ENCODE measurements at regions of chr15 and their contacts with region 1.

Region 1: GRCh38 chr15:90071208-90071807 is 31.0 kb downstream of the IDH2 start:
- DNase-seq: peak; percentile 21
- H3K4me3 ChIP-seq: no peak overlapping the region
- CTCF ChIP-seq: peak; percentile 80

Region 2: GRCh38 chr15:89740137-89740536 is 331.2 kb before region 1 on chr15:
- CTCF ChIA-PET with region 1: interaction called, 13 read pairs
- POLR2A ChIA-PET with region 1: no interaction called
- DNase-seq: no peak
- H3K4me3 ChIP-seq: no peak overlapping the region
- CTCF ChIP-seq: peak; percentile 76

Region 3: GRCh38 chr15:89781891-89782618 is 289.3 kb before region 1 on chr15:
- CTCF ChIA-PET with region 1: no interaction called
- POLR2A ChIA-PET with region 1: no interaction called
- DNase-seq: no peak
- H3K4me3 ChIP-seq: no peak overlapping the region
- CTCF ChIP-seq: no peak

Region 4: DNA sequence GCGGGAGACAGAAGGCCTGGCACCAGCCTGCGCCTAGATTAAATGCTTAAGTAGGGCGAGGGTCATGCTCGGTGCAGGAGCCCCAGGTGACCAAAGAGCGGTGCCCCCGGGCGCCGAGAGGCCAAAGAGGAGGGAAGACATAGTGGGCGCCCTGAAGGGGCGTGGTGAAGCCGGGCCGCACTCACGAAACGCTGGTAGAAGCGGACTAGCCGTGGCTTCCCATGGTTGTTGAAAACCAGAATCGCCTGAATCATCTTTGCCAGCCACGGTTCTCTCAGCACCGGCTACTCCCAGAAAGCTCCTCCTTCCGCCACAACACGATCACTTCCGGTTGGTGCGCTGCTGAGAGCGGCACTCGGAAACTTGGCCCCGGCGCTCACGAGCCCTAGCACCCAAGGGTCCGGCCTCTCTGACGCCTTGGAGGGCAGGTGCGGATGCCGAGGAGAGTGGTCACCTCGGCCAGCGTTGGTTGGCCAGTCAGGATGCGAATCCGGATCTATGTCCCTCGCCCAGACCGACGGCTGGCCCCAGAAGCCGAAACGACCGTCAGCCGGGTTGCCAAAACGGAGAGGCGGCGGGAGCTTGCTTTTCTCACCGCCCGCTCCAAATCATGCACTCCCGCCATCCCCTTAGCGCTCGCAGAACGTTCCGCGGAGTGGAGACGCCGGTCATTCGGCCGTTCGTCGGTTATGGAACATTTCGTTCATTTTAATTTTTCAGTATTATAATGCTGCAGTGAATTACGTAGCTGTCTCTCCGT is 177.4 kb before region 1 on chr15 and contains the start of gene AP3S2:
- CTCF ChIA-PET with region 1: interaction called, 40 read pairs
- POLR2A ChIA-PET with region 1: no interaction called
- DNase-seq: peak; percentile 62
- H3K4me3 ChIP-seq: peak within 1 kb of the TSS; percentile 91
- CTCF ChIP-seq: no peak

Region 5: GRCh38 chr15:90035095-90035827 is 36.0 kb before region 1 on chr15:
- CTCF ChIA-PET with region 1: interaction called, 16 read pairs
- POLR2A ChIA-PET with region 1: no interaction called
- DNase-seq: no peak
- H3K4me3 ChIP-seq: no peak overlapping the region
- CTCF ChIP-seq: no peak

Region 6: DNA sequence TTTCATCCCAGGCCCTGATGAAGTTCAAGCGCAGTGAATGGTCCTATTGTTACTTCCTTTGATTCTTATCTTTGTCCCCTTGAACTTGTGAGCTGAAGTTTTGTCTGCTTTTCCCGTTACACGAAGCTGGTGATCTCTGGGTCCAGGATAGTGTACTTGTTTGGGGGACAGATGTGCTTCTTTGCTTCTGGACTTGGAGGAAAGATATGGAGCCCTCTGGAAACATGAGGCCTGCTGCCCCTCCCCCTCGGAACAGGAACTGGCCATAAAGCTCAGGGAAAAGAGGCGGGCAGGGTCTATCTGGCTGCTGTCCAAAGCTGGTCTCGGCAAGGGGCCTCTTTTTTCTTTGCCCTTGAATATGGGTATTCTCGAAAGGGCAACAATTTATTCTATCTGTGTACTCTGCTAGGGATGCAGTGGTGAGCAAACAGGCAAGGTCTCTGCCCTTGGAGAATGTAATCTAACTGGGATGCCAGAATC is 16.6 kb before region 1 on chr15:
- CTCF ChIA-PET with region 1: interaction called, 13 read pairs
- POLR2A ChIA-PET with region 1: no interaction called
- DNase-seq: no peak
- H3K4me3 ChIP-seq: no peak overlapping the region
- CTCF ChIP-seq: no peak